IMR-90 (cell line): ENCODE measurements at regions of chrX and their contacts with region 1.

Region 1: DNA sequence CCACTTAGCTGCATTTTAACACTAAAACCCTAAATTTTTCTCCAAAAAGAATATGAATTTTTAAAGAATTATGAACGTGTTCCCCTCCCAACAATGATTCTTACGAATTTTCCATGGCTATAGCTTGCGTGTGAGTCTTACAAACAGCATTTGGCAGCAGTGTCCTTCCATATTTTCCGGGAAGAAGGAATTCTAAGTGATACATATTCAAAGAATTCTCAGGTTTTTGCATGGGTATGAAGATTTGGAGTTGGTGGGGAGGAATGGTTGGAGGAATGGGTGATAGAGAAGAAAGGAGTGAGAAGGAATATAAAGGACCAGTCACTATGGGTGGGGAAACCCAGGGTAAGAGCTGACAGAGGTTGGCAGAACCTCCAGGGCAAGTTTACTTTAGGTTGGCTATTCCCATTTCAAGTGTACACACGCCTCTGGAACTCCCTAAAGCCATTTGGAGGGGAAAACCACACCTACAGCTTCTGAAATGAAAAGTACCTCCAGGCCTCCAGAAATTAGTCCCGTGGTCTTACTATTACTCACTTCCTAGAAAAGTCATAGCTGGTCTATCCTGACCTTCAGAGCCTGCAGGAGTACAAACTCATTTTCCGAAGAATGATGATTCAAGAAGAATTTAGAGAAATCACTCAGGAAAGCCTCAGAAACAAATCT is 420.8 kb upstream of the DIPK2B start:
- DNase-seq: peak; percentile 80
- ATAC-seq: peak; percentile 16; the same call in 1 of the 2 replicates
- H3K4me3 ChIP-seq: no peak overlapping the region
- H3K27ac ChIP-seq: peak overlapping the region; percentile 78
- H3K4me1 ChIP-seq: peaks cover 2% of the 10 kb centered on the region; the same call in 1 of the 2 replicates
- H3K27me3 ChIP-seq: no peaks in the 10 kb centered on the region
- CTCF ChIP-seq: no peak
- POLR2A ChIP-seq: no peak
- RAD21 ChIP-seq: no peak

Region 2: GRCh38 chrX:44872817-44873414 is 748.6 kb before region 1 on chrX and contains the start of gene KDM6A:
- CTCF ChIA-PET with region 1: no interaction called
- POLR2A ChIA-PET with region 1: no interaction called
- dilution Hi-C with region 1: no loop called
- in situ Hi-C with region 1: no loop called
- intact Hi-C with region 1: no loop called
- DNase-seq: peak; percentile 96
- ATAC-seq: peak; percentile 90
- H3K4me3 ChIP-seq: peak within 1 kb of the TSS; percentile 93
- H3K27ac ChIP-seq: peak within 1 kb of the TSS; percentile 89
- H3K4me1 ChIP-seq: no peaks in the 10 kb centered on the region
- H3K27me3 ChIP-seq: no peaks in the 10 kb centered on the region
- CTCF ChIP-seq: no peak
- POLR2A ChIP-seq: peak; percentile 69
- RAD21 ChIP-seq: no peak
- total RNA-seq, gene KDM6A: 24.9 and 25.3 TPM in 2 replicates

Region 3: DNA sequence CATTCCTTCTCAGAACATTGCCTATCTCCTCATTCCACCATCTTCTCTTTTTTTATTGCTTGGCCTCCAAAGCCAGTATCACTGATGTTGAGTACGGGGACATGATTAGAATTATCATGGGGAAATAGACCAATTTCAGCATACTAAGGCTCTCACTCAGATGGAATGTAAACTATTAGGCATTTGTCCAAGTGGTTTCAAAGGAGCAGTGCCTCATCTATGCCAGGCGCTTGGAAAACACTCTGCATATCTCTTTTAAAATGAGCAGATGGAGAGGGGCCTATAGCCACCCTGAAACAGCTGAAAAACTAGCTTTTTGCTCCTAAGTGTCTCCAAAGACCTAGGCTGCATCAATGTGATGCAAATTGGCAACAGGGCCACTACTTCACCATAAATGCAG is 270.0 kb before region 1 on chrX:
- CTCF ChIA-PET with region 1: no interaction called
- POLR2A ChIA-PET with region 1: no interaction called
- dilution Hi-C with region 1: no loop called
- in situ Hi-C with region 1: no loop called
- intact Hi-C with region 1: loop called (anchors 1 kb)
- DNase-seq: peak; percentile 69
- ATAC-seq: peak; percentile 81
- H3K4me3 ChIP-seq: no peak overlapping the region
- H3K27ac ChIP-seq: no peak overlapping the region
- H3K4me1 ChIP-seq: peaks cover 6% of the 10 kb centered on the region
- H3K27me3 ChIP-seq: no peaks in the 10 kb centered on the region
- CTCF ChIP-seq: no peak
- POLR2A ChIP-seq: no peak
- RAD21 ChIP-seq: no peak

Region 4: GRCh38 chrX:45554736-45555135 is 66.8 kb before region 1 on chrX:
- CTCF ChIA-PET with region 1: no interaction called
- POLR2A ChIA-PET with region 1: no interaction called
- dilution Hi-C with region 1: no loop called
- in situ Hi-C with region 1: no loop called
- intact Hi-C with region 1: no loop called
- DNase-seq: no peak
- ATAC-seq: no peak
- H3K4me3 ChIP-seq: no peak overlapping the region
- H3K27ac ChIP-seq: no peak overlapping the region
- H3K4me1 ChIP-seq: no peaks in the 10 kb centered on the region
- H3K27me3 ChIP-seq: no peaks in the 10 kb centered on the region
- CTCF ChIP-seq: no peak
- POLR2A ChIP-seq: no peak
- RAD21 ChIP-seq: no peak

Region 5: GRCh38 chrX:45719751-45720501 is 98.4 kb after region 1 on chrX:
- CTCF ChIA-PET with region 1: no interaction called
- POLR2A ChIA-PET with region 1: no interaction called
- dilution Hi-C with region 1: no loop called
- in situ Hi-C with region 1: no loop called
- intact Hi-C with region 1: no loop called
- DNase-seq: no peak
- ATAC-seq: no peak
- H3K4me3 ChIP-seq: no peak overlapping the region
- H3K27ac ChIP-seq: no peak overlapping the region
- H3K4me1 ChIP-seq: no peaks in the 10 kb centered on the region; the same call in 1 of the 2 replicates
- H3K27me3 ChIP-seq: no peaks in the 10 kb centered on the region
- CTCF ChIP-seq: no peak
- POLR2A ChIP-seq: no peak
- RAD21 ChIP-seq: no peak

Region 6: DNA sequence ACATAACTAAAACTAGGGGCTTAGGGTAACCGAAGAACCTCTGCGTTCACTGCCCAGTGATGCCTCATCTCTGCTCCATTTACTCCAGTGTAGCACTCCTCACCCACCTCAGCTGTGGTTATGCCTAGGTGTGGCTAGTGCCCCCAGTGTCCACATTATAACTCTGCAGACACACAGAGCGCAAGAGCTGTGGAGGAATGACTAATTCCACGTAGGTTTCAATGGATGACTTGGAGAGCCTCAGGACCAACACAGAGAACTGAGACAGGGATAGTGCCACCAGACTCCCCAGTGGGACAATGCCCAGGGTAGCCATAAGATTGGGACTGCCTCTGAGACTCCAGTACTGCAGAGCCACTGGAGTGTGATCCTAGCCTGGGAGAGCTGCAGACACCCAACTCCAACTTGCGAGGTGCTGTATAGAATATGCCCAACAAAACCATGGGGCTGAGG is 121.6 kb after region 1 on chrX:
- CTCF ChIA-PET with region 1: no interaction called
- POLR2A ChIA-PET with region 1: no interaction called
- dilution Hi-C with region 1: no loop called
- in situ Hi-C with region 1: no loop called
- intact Hi-C with region 1: loop called (anchors 2 kb)
- DNase-seq: peak; percentile 75
- ATAC-seq: peak; percentile 62
- H3K4me3 ChIP-seq: no peak overlapping the region
- H3K27ac ChIP-seq: no peak overlapping the region
- H3K4me1 ChIP-seq: no peaks in the 10 kb centered on the region
- H3K27me3 ChIP-seq: no peaks in the 10 kb centered on the region
- CTCF ChIP-seq: peak; percentile 40
- POLR2A ChIP-seq: no peak; the same call in 1 of the 2 replicates
- RAD21 ChIP-seq: peak; percentile 48